ENCODE measurements at regions of chr7 and their contacts with region 1.

Region 1: DNA sequence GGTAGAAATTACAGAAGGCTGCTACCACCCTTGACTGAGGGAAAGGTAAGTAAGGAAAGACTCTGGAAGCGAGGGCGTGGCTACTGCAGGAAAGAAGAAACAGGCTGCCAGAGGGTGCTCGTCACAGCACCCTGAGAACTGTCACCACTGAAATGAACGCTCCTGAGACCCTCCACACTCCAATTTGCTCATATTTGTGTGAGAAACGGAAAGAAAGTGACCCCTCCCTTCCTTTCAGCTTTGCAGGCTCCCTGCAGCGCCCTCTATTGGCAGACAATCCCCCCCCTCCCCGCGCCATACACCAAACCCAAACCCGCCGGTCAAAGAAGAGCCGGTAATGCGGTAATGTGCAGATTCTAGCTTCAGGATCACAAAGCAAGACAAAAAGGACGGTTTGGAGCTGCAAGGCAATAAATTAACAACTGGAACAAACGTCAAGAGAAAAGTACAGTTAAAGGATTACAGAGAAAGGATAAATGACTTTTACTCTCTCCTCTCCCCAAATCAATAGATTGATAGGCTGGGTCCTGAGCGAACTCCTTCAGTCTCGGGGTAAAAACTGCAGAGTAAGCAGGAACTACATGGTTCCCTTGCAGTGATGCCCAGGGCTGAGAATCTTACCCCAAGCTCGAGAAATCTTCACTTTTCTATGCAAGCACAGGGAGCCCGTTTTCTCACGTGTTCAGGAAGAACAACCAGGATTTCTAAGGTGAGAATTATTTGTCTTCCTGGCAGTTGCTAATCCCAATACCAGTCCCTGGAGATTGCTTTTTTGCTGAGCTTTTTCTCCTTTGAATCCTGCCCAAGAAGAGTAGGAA is 47.6 kb downstream of the STEAP1B start:
- DNase-seq: peak; percentile 70
- H3K4me3 Mint-ChIP-seq: no peak overlapping the region
- H3K27ac Mint-ChIP-seq: no peak overlapping the region
- H3K4me1 Mint-ChIP-seq: peaks cover 5% of the 10 kb centered on the region
- H3K27me3 Mint-ChIP-seq: peaks cover 30% of the 10 kb centered on the region

Region 2: GRCh38 chr7:22499044-22499443 is 46.7 kb after region 1 on chr7:
- CTCF ChIA-PET with region 1: no interaction called
- intact Hi-C with region 1: loop called (anchors 2 kb)
- DNase-seq: no peak
- H3K4me3 Mint-ChIP-seq: no peak overlapping the region
- H3K27ac Mint-ChIP-seq: no peak overlapping the region
- H3K4me1 Mint-ChIP-seq: peaks cover 3% of the 10 kb centered on the region
- H3K27me3 Mint-ChIP-seq: peaks cover 16% of the 10 kb centered on the region